Natural killer cell (primary cell): ENCODE measurements at regions of chr16 and their contacts with region 1.

Region 1: GRCh38 chr16:50326949-50327402 is 41.8 kb downstream of the BRD7 start:
- DNase-seq: peak; percentile 63 to 89
- ATAC-seq: peak; percentile 91 to 97 (median 94)
- H3K4me3 ChIP-seq: no peak overlapping the region
- H3K4me3 Mint-ChIP-seq: peak overlapping the region; percentile 8
- H3K27ac ChIP-seq: peak overlapping the region; percentile 74
- H3K27ac Mint-ChIP-seq: peak overlapping the region; percentile 83 to 84
- H3K4me1 ChIP-seq: peaks cover 22% of the 10 kb centered on the region
- H3K4me1 Mint-ChIP-seq: peaks cover 58 to 61% of the 10 kb centered on the region in 2 donors
- H3K27me3 ChIP-seq: no peaks in the 10 kb centered on the region
- H3K27me3 Mint-ChIP-seq: no peaks in the 10 kb centered on the region
- CTCF ChIP-seq: peak; percentile 69

Region 2: GRCh38 chr16:50266337-50267091 is 60.5 kb before region 1 on chr16 and contains the start of gene ADCY7:
- intact Hi-C with region 1: loop called (anchors 5 kb)
- DNase-seq: peak; percentile 82 to 87
- ATAC-seq: peak; percentile 79 to 86 (median 85)
- H3K4me3 ChIP-seq: peak within 1 kb of the TSS; percentile 75
- H3K4me3 Mint-ChIP-seq: peak within 1 kb of the TSS; percentile 88
- H3K27ac ChIP-seq: peak within 1 kb of the TSS; percentile 72
- H3K27ac Mint-ChIP-seq: peak within 1 kb of the TSS; percentile 91 to 99
- H3K4me1 ChIP-seq: peaks cover 87% of the 10 kb centered on the region
- H3K4me1 Mint-ChIP-seq: peaks cover 86 to 95% of the 10 kb centered on the region in 2 donors
- H3K27me3 ChIP-seq: no peaks in the 10 kb centered on the region
- H3K27me3 Mint-ChIP-seq: no peaks in the 10 kb centered on the region
- CTCF ChIP-seq: no peak
- total RNA-seq, gene ADCY7: 479 to 591 (median 512) TPM

Region 3: DNA sequence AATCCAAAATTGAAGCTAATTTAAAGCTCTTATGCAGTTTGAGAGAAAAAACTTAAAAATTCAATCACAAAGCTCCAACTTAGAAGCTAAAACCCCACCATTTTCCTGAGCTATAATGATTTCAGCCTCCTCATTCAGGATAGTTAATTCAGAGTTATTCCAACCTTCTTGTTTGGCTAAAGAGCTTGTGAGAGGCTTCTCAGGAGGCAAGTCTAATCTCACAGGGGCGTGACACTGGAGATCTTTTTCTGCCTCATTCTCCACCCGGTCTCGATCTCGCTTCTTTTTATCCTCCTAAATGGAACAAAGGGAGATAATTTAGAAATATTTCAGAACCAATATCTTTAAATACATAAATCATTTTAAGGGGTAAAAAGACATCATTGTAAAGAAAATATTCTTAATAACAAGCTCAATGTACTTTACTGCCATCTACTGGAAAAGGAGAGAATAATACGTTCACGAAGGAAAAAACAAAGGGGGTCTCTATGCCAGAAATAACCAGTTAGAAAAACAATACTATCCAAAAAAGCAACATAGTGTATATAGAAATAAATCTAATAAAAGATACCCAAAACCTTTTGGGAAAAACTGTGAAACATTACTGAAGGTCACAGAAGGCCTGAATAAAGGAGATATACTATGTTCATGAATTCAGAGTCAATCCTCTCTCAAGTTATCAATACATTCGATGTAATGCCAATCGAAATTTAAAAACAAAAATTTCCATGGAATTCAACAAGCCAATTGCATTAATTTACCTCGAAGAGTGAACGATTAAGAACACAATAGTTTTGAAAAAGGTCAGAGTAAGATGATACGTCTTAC is 27.9 kb after region 1 on chr16:
- intact Hi-C with region 1: loop called (anchors 1 kb)
- DNase-seq: peak in 1 of 2 donors; percentile 56
- ATAC-seq: peak in 2 of 3 donors; percentile 51 to 59
- H3K4me3 ChIP-seq: no peak overlapping the region
- H3K4me3 Mint-ChIP-seq: no peak overlapping the region
- H3K27ac ChIP-seq: peak overlapping the region; percentile 37
- H3K27ac Mint-ChIP-seq: peak overlapping the region; percentile 68 to 86
- H3K4me1 ChIP-seq: no peaks in the 10 kb centered on the region
- H3K4me1 Mint-ChIP-seq: peaks cover 16 to 17% of the 10 kb centered on the region in 2 donors
- H3K27me3 ChIP-seq: no peaks in the 10 kb centered on the region
- H3K27me3 Mint-ChIP-seq: no peaks in the 10 kb centered on the region
- CTCF ChIP-seq: peak; percentile 88

Region 4: GRCh38 chr16:50368410-50369132 is 41.6 kb after region 1 on chr16 and contains the start of gene BRD7:
- intact Hi-C with region 1: loop called (anchors 5 kb)
- DNase-seq: peak; percentile 75 to 81
- ATAC-seq: peak; percentile 92 to 95 (median 93)
- H3K4me3 ChIP-seq: peak within 1 kb of the TSS; percentile 42
- H3K4me3 Mint-ChIP-seq: peak within 1 kb of the TSS; percentile 97
- H3K27ac ChIP-seq: peak within 1 kb of the TSS; percentile 78
- H3K27ac Mint-ChIP-seq: peak within 1 kb of the TSS; percentile 89 to 97
- H3K4me1 ChIP-seq: peaks cover 10% of the 10 kb centered on the region
- H3K4me1 Mint-ChIP-seq: peaks cover 43 to 47% of the 10 kb centered on the region in 2 donors
- H3K27me3 ChIP-seq: no peaks in the 10 kb centered on the region
- H3K27me3 Mint-ChIP-seq: peaks cover 3 to 6% of the 10 kb centered on the region in 2 donors
- CTCF ChIP-seq: no peak
- total RNA-seq, gene BRD7: 89.2 to 118 (median 94.9) TPM

Region 5: GRCh38 chr16:50509521-50510341 is 182.8 kb after region 1 on chr16:
- intact Hi-C with region 1: loop called (anchors 10 kb)
- DNase-seq: peak; percentile 38 to 60
- ATAC-seq: peak in 1 of 3 donors; percentile 44
- H3K4me3 ChIP-seq: no peak overlapping the region
- H3K4me3 Mint-ChIP-seq: no peak overlapping the region
- H3K27ac ChIP-seq: no peak overlapping the region
- H3K27ac Mint-ChIP-seq: no peak overlapping the region
- H3K4me1 ChIP-seq: no peaks in the 10 kb centered on the region
- H3K4me1 Mint-ChIP-seq: peaks cover 0 to 5% of the 10 kb centered on the region in 2 donors
- H3K27me3 ChIP-seq: no peaks in the 10 kb centered on the region
- H3K27me3 Mint-ChIP-seq: no peaks in the 10 kb centered on the region
- CTCF ChIP-seq: peak; percentile 80

Region 6: GRCh38 chr16:50665128-50665878 is 338.3 kb after region 1 on chr16:
- intact Hi-C with region 1: loop called (anchors 1 kb)
- DNase-seq: peak; percentile 80 to 90
- ATAC-seq: peak; percentile 73 to 78 (median 74)
- H3K4me3 ChIP-seq: peak overlapping the region; percentile 56
- H3K4me3 Mint-ChIP-seq: peak overlapping the region; percentile 83
- H3K27ac ChIP-seq: peak overlapping the region; percentile 67
- H3K27ac Mint-ChIP-seq: peak overlapping the region; percentile 73 to 93
- H3K4me1 ChIP-seq: peaks cover 29% of the 10 kb centered on the region
- H3K4me1 Mint-ChIP-seq: peaks cover 23 to 30% of the 10 kb centered on the region in 2 donors
- H3K27me3 ChIP-seq: no peaks in the 10 kb centered on the region
- H3K27me3 Mint-ChIP-seq: no peaks in the 10 kb centered on the region
- CTCF ChIP-seq: peak; percentile 80

Region 7: DNA sequence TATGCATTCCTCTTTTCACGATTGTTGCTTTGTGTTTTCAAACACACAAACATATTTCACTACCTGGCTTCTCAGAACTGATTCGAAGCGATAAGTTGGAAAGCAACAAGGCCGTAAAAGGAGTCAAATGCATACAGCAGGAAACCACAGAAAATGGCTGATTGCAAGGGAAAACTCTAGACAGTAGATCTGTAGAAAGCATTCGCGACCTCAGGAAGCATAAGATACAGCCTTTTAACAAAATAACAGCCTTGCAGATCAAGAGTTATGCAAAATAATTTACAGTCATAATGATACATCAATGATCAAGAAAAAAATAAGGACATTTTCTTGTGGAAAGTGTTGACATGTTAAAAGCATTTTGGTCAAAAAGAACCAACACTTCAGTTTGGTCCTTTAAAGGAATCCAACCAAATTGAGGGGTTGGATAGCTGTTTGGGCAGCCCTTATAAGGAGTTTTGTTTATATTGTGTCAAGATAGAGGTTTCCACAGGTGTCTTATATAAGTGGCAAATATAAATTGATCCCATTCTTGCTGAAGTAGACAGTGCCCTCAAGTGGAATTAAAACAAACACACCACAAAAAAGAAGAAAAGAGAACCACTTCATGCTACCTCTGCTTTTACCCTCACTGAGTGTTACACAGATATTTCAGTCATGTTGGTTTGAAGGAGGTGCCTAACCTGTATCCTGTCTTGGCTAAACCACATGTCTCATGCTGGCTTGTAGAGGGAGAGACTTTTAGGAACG is 420.4 kb after region 1 on chr16:
- intact Hi-C with region 1: loop called (anchors 2 kb)
- DNase-seq: peak in 1 of 2 donors; percentile 79
- ATAC-seq: peak; percentile 66 to 85 (median 73)
- H3K4me3 ChIP-seq: no peak overlapping the region
- H3K4me3 Mint-ChIP-seq: peak overlapping the region; percentile 83
- H3K27ac ChIP-seq: peak overlapping the region; percentile 80
- H3K27ac Mint-ChIP-seq: peak overlapping the region; percentile 87 to 92
- H3K4me1 ChIP-seq: peaks cover 20% of the 10 kb centered on the region
- H3K4me1 Mint-ChIP-seq: peaks cover 41 to 53% of the 10 kb centered on the region in 2 donors
- H3K27me3 ChIP-seq: no peaks in the 10 kb centered on the region
- H3K27me3 Mint-ChIP-seq: no peaks in the 10 kb centered on the region
- CTCF ChIP-seq: peak; percentile 56